PC-3 (cell line): ENCODE measurements at regions of chr1 and their contacts with region 1.

Region 1: GRCh38 chr1:178282949-178283367 is 189.1 kb downstream of the RASAL2 start:
- DNase-seq: peak; percentile 62
- ATAC-seq: peak; percentile 85
- H3K4me3 ChIP-seq: no peak overlapping the region
- H3K27ac ChIP-seq: peak overlapping the region; percentile 51
- H3K4me1 ChIP-seq: peaks cover 23% of the 10 kb centered on the region
- H3K27me3 ChIP-seq: no peaks in the 10 kb centered on the region
- CTCF ChIP-seq: peak; percentile 61

Region 2: DNA sequence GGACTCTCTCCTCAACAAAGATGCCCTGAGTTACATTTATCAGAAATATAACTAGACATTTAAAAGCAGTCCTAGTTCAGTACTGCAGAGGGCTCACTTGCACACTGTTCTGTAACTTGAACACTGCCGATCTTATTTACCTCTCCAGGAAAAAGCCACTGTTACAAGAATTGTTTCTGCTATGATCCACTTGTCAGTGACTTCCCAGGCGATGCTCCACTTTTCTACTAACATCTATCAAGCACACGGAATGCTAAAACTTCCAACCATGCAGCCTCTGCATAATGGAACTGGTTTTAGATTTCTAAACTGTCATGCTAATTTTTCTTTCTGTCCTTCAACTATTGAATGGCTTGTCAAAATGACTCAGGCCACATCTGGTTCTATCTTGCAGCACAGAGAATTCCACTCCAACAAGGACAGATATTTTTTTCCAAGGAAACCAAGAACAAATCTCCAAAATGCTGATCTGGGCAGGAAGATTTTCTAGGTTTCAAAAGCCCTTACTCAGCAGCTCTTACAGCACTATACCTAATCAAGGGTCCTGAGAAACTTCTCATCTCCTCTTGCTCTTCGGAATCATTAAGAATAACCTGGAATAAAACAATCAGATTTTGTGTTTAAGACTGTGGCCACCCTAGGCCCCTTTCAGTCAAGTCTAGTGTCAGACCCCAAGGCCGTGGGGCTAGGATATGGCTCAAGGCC is 323.0 kb before region 1 on chr1:
- CTCF ChIA-PET with region 1: no interaction called
- POLR2A ChIA-PET with region 1: no interaction called
- intact Hi-C with region 1: loop called (anchors 1 kb)
- DNase-seq: peak; percentile 55
- ATAC-seq: peak; percentile 86
- H3K4me3 ChIP-seq: no peak overlapping the region
- H3K27ac ChIP-seq: no peak overlapping the region
- H3K4me1 ChIP-seq: no peaks in the 10 kb centered on the region
- H3K27me3 ChIP-seq: no peaks in the 10 kb centered on the region
- CTCF ChIP-seq: peak; percentile 64

Region 3: GRCh38 chr1:178055779-178056471 is 227.0 kb before region 1 on chr1:
- CTCF ChIA-PET with region 1: no interaction called
- POLR2A ChIA-PET with region 1: no interaction called
- intact Hi-C with region 1: loop called (anchors 1 kb)
- DNase-seq: peak; percentile 54
- ATAC-seq: peak; percentile 80
- H3K4me3 ChIP-seq: 0 out of 2 replicates have a peak overlapping the region, but pooled peaks have one; percentile 21
- H3K27ac ChIP-seq: peak overlapping the region; percentile 49
- H3K4me1 ChIP-seq: peaks cover 17% of the 10 kb centered on the region
- H3K27me3 ChIP-seq: no peaks in the 10 kb centered on the region
- CTCF ChIP-seq: peak; percentile 51

Region 4: DNA sequence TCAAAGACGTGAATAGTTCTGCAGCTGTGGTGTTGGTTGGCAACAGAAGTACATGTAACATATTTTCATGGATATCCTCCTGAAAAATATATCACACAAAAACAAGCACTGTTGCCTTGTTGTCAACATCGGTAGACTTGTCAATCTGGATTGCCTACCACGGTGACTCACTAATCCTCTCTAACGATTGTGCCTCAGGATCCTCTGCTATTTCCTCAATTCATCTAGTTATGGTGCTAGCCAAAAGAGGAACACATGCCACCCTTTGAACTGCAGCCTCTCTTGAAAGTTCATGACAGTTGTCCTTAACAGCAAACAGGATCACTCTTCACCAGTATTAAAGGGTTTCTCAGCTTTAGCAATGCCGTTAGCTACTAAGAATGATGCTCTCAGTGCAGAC is 163.3 kb before region 1 on chr1:
- CTCF ChIA-PET with region 1: no interaction called
- POLR2A ChIA-PET with region 1: no interaction called
- intact Hi-C with region 1: no loop called
- DNase-seq: peak; percentile 69
- ATAC-seq: no peak; the same call in 1 of the 2 replicates
- H3K4me3 ChIP-seq: no peak overlapping the region
- H3K27ac ChIP-seq: 0 out of 2 replicates have a peak overlapping the region, but pooled peaks have one; percentile 20
- H3K4me1 ChIP-seq: peaks cover 30% of the 10 kb centered on the region
- H3K27me3 ChIP-seq: no peaks in the 10 kb centered on the region
- CTCF ChIP-seq: no peak

Region 5: GRCh38 chr1:178168536-178168935 is 114.4 kb before region 1 on chr1:
- CTCF ChIA-PET with region 1: no interaction called
- POLR2A ChIA-PET with region 1: no interaction called
- intact Hi-C with region 1: loop called (anchors 5 kb)
- DNase-seq: peak; percentile 31
- ATAC-seq: peak; percentile 93
- H3K4me3 ChIP-seq: no peak overlapping the region
- H3K27ac ChIP-seq: no peak overlapping the region
- H3K4me1 ChIP-seq: peaks cover 5% of the 10 kb centered on the region; the same call in 1 of the 2 replicates
- H3K27me3 ChIP-seq: no peaks in the 10 kb centered on the region
- CTCF ChIP-seq: no peak

Region 6: DNA sequence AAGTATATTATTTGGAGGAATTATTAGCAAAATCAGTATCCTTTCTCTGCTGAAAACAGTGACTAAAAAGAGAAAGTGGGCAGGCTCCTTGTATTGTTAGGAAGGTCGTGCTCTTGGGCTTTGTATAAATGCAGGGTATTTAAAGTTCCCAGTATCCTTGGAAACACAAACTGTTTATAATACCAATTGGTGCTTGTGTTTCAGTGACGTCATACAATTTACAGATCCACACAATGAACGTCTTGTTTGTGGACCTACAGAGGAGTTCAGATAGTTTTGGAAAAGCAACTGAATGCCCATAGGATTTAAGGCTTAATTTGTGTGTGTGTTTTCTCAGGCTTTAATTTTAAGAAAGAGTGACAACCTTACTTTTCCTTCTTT is 20.8 kb before region 1 on chr1:
- CTCF ChIA-PET with region 1: no interaction called
- POLR2A ChIA-PET with region 1: no interaction called
- intact Hi-C with region 1: no loop called
- DNase-seq: peak; percentile 6
- ATAC-seq: no peak
- H3K4me3 ChIP-seq: no peak overlapping the region
- H3K27ac ChIP-seq: peak overlapping the region; percentile 39; the same call in 1 of the 2 replicates
- H3K4me1 ChIP-seq: peaks cover 3% of the 10 kb centered on the region; the same call in 1 of the 2 replicates
- H3K27me3 ChIP-seq: no peaks in the 10 kb centered on the region
- CTCF ChIP-seq: no peak